Aorta (tissue), 5 donors: ENCODE measurements at regions of chr5 and their contacts with region 1.

Region 1: GRCh38 chr5:78467752-78468357 is 107.4 kb downstream of the SCAMP1 start:
- DNase-seq: no peak
- ATAC-seq: no peak
- H3K4me3 ChIP-seq: no peak overlapping the region
- H3K27ac ChIP-seq: no peak overlapping the region
- H3K4me1 ChIP-seq: peaks cover 0 to 1% of the 10 kb centered on the region in 2 donors
- H3K27me3 ChIP-seq: no peaks in the 10 kb centered on the region

Region 2: DNA sequence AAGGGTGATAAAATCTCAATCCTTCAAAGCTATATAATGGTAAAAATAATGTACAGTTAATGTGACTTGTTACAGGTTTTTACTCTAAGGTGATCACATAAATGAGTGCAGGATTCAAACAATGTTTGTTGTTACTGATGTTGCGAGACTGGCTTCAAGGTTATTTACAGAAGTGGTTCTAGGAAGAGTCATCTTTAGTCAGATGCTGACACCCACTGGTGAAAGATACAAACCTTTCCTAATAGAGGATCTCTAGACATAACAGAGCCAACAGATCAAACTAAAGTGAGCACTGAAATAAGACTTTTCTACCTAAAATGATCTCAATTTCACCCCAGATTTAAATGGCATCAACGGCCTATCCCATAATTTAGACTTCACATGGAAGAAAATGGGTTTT is 497.0 kb after region 1 on chr5:
- intact Hi-C with region 1: loop called (anchors 5 kb)
- DNase-seq: no peak
- ATAC-seq: no peak
- H3K4me3 ChIP-seq: no peak overlapping the region
- H3K27ac ChIP-seq: no peak overlapping the region
- H3K4me1 ChIP-seq: no peaks in the 10 kb centered on the region
- H3K27me3 ChIP-seq: no peaks in the 10 kb centered on the region

Region 3: DNA sequence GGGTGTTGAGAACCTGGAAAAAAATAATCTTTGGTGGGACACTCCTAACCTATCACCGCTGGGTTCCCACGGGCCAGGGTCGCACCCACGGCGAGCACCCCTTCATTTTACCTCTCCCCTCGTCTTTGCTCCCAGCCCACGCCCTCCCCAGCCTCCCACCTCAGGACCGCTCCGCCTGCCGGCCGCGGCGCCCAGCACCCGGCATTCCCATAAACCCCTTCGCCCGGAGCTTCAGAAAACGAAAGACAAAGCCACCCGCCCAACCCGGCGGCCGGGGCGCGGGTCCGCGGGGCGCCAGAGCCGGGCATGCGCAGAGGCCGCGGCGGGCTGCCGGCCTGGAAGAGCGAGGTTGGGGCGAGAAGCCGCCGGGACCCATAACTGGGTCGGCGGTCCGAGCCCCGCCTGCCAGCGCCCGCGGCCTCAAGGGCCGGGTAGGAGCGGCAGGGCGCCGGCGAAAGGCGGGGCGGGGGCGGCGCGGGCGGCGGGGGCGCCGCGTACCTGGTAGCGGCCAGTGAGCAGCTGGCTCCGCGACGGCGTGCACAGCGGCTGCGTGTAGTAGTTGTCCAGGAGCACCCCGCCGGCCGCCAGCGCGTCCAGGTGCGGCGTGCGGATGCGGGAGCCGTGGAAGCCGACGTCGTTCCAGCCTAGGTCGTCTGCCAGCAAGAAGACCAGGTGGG is 516.7 kb after region 1 on chr5:
- intact Hi-C with region 1: loop called in 1 of 2 experiments (anchors 5 kb)
- DNase-seq: peak; percentile 89 to 94
- ATAC-seq: peak; percentile 92
- H3K4me3 ChIP-seq: peak overlapping the region; percentile 87 to 89
- H3K27ac ChIP-seq: peak overlapping the region; percentile 58 to 99
- H3K4me1 ChIP-seq: peaks cover 0 to 3% of the 10 kb centered on the region in 2 donors
- H3K27me3 ChIP-seq: no peaks in the 10 kb centered on the region